HEK293 (cell line): ENCODE measurements at regions of chr20 and their contacts with region 1.

Region 1: GRCh38 chr20:58236612-58237330 is 8.3 kb upstream of the ANKRD60 start:
- H3K4me3 ChIP-seq: peak overlapping the region; percentile 19
- H3K27ac ChIP-seq: no peak overlapping the region
- H3K4me1 ChIP-seq: no peaks in the 10 kb centered on the region
- CTCF ChIP-seq: peak; percentile 90

Region 2: GRCh38 chr20:58160451-58161061 is 76.2 kb before region 1 on chr20:
- CTCF ChIA-PET with region 1: no interaction called
- POLR2A ChIA-PET with region 1: no interaction called
- H3K4me3 ChIP-seq: no peak overlapping the region
- H3K27ac ChIP-seq: no peak overlapping the region
- H3K4me1 ChIP-seq: no peaks in the 10 kb centered on the region
- CTCF ChIP-seq: no peak

Region 3: GRCh38 chr20:58224974-58225373 is 11.8 kb before region 1 on chr20:
- CTCF ChIA-PET with region 1: interaction called, 10 read pairs
- POLR2A ChIA-PET with region 1: no interaction called
- H3K4me3 ChIP-seq: no peak overlapping the region
- H3K27ac ChIP-seq: no peak overlapping the region
- H3K4me1 ChIP-seq: no peaks in the 10 kb centered on the region
- CTCF ChIP-seq: no peak

Region 4: DNA sequence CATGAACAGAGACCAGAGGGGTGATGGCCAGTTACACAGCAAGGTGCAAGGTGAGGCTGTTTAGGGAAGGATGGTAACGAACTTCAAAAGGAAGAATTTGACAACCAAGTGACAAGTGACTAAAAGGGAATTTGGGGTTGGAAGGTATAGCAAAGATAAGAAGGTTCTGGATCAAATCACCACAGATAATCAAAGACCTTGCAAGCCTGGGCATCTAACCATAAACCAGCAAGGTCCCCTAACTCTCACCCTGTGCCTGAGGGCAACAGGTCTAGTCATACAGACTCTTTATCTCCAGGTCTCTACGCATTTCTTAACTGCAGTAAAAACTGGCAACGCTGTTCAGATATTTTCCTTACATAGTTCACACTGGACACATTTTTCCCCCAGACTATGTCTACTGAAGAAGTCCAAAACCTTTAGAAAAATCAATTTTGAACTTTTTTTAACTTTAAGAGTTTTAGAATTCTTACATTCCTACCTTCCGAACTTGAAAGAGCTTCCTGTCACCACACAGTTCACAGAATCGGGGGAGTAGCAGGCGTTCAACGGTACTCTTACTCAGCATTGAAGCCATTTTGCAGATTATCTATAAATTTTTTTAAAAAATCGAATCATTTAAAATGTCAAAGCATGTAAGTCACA is 14.6 kb after region 1 on chr20:
- CTCF ChIA-PET with region 1: interaction called, 13 read pairs
- POLR2A ChIA-PET with region 1: no interaction called
- H3K4me3 ChIP-seq: no peak overlapping the region
- H3K27ac ChIP-seq: no peak overlapping the region
- H3K4me1 ChIP-seq: no peaks in the 10 kb centered on the region
- CTCF ChIP-seq: no peak

Region 5: GRCh38 chr20:58447511-58448391 is 211.0 kb after region 1 on chr20:
- CTCF ChIA-PET with region 1: interaction called, 29 read pairs
- POLR2A ChIA-PET with region 1: no interaction called
- H3K4me3 ChIP-seq: no peak overlapping the region
- H3K27ac ChIP-seq: no peak overlapping the region
- H3K4me1 ChIP-seq: no peaks in the 10 kb centered on the region
- CTCF ChIP-seq: peak; percentile 18; the same call in 1 of the 2 replicates

Region 6: GRCh38 chr20:58839474-58839874 is 602.7 kb after region 1 on chr20:
- CTCF ChIA-PET with region 1: interaction called, 13 read pairs
- POLR2A ChIA-PET with region 1: no interaction called
- H3K4me3 ChIP-seq: peak overlapping the region; percentile 10; the same call in 1 of the 2 replicates
- H3K27ac ChIP-seq: no peak overlapping the region
- H3K4me1 ChIP-seq: no peaks in the 10 kb centered on the region
- CTCF ChIP-seq: peak; percentile 87